CD4-positive, alpha-beta memory T cell (primary cell): ENCODE measurements at regions of chr12 and their contacts with region 1.

Region 1: GRCh38 chr12:64596252-64596793 is 14.0 kb upstream of the RASSF3 start:
- DNase-seq: no peak
- H3K4me3 ChIP-seq: no peak overlapping the region
- H3K4me3 Mint-ChIP-seq: peak overlapping the region in 1 of 8 donors; percentile 55
- H3K27ac ChIP-seq: no peak overlapping the region
- H3K27ac Mint-ChIP-seq: peak overlapping the region in 3 of 7 donors; percentile 5 to 66 (median 23)
- H3K4me1 ChIP-seq: peaks cover 43% of the 10 kb centered on the region
- H3K4me1 Mint-ChIP-seq: peaks cover 30 to 49% (median 38%) of the 10 kb centered on the region in 4 donors
- H3K27me3 ChIP-seq: no peaks in the 10 kb centered on the region
- H3K27me3 Mint-ChIP-seq: no peaks in the 10 kb centered on the region

Region 2: DNA sequence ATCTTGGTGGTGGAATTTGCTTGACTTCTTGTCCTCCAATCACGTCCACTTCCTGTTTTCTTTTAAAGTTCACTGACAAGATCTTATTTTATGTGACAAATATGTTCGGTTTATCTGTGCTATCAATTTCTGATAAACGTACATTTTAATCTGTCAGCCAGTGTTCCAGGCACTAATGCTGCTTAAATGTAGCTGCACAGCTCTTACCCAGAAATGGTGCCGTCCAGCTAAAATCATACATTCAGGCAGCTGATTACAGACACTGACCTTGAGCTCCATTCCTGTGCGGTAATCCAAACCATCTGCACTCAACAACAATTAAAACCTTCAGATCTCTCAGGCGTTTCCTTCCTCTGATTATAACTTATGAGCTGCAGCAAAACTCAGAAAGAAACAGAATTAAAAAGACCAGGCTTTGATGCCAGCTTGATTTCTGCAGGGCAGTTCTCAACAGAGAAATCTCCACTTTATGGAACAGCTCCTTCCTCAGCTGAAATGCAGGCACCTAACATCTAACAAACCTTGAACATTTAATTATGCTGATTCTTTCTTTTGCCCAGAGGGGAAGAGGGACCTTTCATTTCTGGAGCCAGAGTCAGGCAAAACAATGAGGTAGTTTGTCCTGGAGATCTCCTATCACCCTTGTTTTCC is 12.4 kb before region 1 on chr12:
- CTCF ChIA-PET with region 1: interaction called, 8 read pairs
- POLR2A ChIA-PET with region 1: interaction called, 18 read pairs
- intact Hi-C with region 1: no loop called
- DNase-seq: peak in 4 of 5 donors; percentile 19 to 27 (median 24)
- H3K4me3 ChIP-seq: peak overlapping the region; percentile 36 to 55
- H3K4me3 Mint-ChIP-seq: peak overlapping the region; percentile 40 to 79 (median 74)
- H3K27ac ChIP-seq: peak overlapping the region; percentile 0
- H3K27ac Mint-ChIP-seq: peak overlapping the region; percentile 38 to 89 (median 75)
- H3K4me1 ChIP-seq: peaks cover 35% of the 10 kb centered on the region
- H3K4me1 Mint-ChIP-seq: peaks cover 21 to 40% (median 29%) of the 10 kb centered on the region in 4 donors
- H3K27me3 ChIP-seq: no peaks in the 10 kb centered on the region
- H3K27me3 Mint-ChIP-seq: no peaks in the 10 kb centered on the region